Motor neuron (in vitro differentiated cells): ENCODE measurements at regions of chr17 and their contacts with region 1.

Region 1: DNA sequence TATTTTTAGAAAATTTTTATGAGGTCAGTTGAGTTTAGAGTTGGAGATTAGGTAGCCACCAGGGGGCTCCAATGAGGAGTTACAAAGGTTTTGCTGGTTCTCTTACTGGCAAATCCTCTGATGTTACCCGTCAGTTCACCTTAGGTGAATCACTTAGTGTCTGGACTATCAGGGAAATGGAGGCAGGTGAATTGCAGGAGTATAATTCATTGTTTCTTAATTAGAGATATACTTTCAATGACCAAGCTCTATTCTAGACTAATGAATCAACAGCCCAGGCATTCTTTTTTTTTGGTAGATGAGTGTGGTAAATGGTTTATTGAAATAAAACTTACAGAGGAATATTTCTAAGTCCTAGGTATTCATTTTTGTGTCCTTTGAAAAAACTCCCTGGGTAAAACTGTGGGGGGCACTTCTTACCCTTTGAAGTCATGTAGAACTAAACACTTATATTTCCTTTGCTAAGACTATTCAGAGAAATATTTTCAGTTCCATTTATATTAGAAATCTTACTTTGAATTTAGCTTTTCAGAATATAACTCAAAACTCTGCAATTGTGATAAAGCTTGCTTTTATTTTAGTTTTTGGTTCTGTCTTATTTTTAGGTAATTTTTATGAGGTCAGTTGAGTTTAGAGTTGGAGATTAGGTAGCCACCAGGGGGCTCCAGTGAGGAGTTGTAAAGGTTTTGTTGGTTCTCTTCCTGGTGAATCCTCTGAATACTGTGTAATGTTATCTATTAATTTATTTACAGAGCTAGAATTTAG is 17.7 kb downstream of the PSMD11 start:
- ATAC-seq: peak in 4 of 8 experiments; percentile 49 to 64 (median 62)
- H3K4me3 ChIP-seq: no peak overlapping the region
- H3K27ac ChIP-seq: no peak overlapping the region
- H3K4me1 ChIP-seq: no peaks in the 10 kb centered on the region

Region 2: DNA sequence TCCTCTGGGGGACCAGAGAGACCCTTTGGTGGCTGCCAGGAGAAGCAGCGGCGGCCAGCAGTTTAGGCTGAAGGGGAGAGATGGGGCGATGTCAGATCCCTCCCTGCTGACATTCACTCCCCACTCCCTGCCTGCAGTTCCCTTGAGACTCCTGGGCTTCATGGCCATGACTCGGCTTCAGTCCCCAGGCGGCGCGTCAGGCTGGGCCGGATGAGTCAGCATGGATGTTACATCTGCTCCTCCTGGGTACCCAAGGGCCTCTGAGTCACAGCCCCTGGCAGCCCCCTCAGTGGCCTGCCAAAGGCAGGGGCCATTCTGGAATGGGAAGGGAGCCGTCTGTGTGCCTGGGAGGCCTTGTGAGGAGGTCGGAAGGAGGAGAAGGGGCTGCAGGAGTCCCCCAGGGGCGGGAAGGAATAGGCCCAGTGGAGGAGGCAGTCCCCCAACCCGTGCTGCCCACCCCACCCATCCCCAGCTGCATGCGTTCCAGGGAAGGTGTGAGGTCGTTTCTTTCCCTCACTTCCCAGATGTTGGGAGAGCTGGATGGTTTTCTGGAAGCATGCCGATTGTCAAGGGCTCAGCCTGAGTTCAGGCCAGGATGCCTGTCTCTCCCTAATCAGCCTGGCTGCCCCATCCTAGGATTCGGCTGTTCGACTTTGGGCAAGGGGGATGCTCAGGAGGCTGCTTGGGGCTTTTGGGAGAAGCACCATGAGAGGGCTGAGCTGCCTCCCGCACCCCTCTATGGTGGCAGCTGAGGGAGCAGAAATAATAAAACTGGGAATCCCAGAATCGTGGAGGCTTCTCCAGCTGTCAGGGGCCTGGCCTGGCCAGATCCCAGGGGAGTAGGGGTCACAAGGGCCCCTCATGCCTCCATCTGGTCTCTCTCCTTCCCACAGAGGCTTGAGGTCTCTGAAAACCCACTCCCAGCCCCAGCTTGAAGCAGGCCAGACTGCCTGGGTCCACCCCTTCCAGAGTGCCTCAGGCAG is 186.7 kb before region 1 on chr17:
- in situ Hi-C with region 1: no loop called
- ATAC-seq: peak; percentile 70 to 96 (median 94)
- H3K4me3 ChIP-seq: peak overlapping the region in 1 of 5 donors; percentile 10
- H3K27ac ChIP-seq: peak overlapping the region; percentile 83 to 89
- H3K4me1 ChIP-seq: peaks cover 62 to 68% of the 10 kb centered on the region in 2 donors

Region 3: GRCh38 chr17:32551186-32551955 is 89.3 kb after region 1 on chr17:
- in situ Hi-C with region 1: loop called in 1 of 9 experiments (anchors 25 kb)
- ATAC-seq: peak in 2 of 8 experiments; percentile 88 to 92
- H3K4me3 ChIP-seq: no peak overlapping the region
- H3K27ac ChIP-seq: no peak overlapping the region
- H3K4me1 ChIP-seq: peaks cover 11 to 15% of the 10 kb centered on the region in 2 donors

Region 4: GRCh38 chr17:32769839-32770238 is 307.8 kb after region 1 on chr17:
- in situ Hi-C with region 1: loop called in 4 of 9 experiments (anchors 10 to 25 kb)
- ATAC-seq: no peak
- H3K4me3 ChIP-seq: no peak overlapping the region
- H3K27ac ChIP-seq: no peak overlapping the region
- H3K4me1 ChIP-seq: no peaks in the 10 kb centered on the region

Region 5: DNA sequence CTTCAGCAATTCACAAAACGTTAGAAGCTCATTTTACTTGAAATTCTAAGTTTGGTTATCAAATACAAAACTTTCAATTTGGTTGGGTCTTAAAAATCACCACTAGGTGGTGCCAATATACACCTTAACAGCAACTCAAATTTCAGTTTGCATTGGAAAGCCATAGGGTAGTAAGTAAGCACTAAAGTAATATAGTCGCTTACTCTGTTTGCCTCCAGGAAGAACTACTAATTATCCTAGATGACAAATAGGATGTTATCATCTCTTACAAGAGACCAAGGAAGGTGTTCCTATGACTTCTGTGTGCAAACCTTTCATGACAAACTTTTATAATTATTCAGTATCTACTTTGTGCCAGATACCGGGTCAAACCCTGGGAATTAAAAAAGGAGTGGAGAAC is 321.6 kb after region 1 on chr17:
- in situ Hi-C with region 1: no loop called
- ATAC-seq: peak in 4 of 8 experiments; percentile 25 to 56 (median 41)
- H3K4me3 ChIP-seq: no peak overlapping the region
- H3K27ac ChIP-seq: no peak overlapping the region
- H3K4me1 ChIP-seq: no peaks in the 10 kb centered on the region